GM12878 (cell line): ENCODE measurements at regions of chr6 and their contacts with region 1.

Region 1: GRCh38 chr6:157756708-157757429 is 66.2 kb upstream of the SNX9 start:
- DNase-seq: no peak
- ATAC-seq: peak; percentile 71
- H3K4me3 ChIP-seq: no peak overlapping the region
- H3K27ac ChIP-seq: no peak overlapping the region
- H3K4me1 ChIP-seq: peaks cover 17% of the 10 kb centered on the region
- H3K27me3 ChIP-seq: peaks cover 0 to 3% of the 10 kb centered on the region in 2 experiments; a peak in 2 of 4 replicates
- CTCF ChIP-seq: peak; percentile 74 to 88 (median 79)
- EP300 ChIP-seq: no peak
- POLR2A ChIP-seq: no peak
- RAD21 ChIP-seq: peak; percentile 74

Region 2: GRCh38 chr6:157845493-157846259 is 88.8 kb after region 1 on chr6:
- CTCF ChIA-PET with region 1: interaction called, 11 read pairs
- POLR2A ChIA-PET with region 1: no interaction called
- RAD21 ChIA-PET with region 1: no interaction called
- SMC1A ChIA-PET with region 1: interaction called, 6 read pairs
- in situ Hi-C with region 1: no loop called
- intact Hi-C with region 1: no loop called
- DNase-seq: no peak
- ATAC-seq: no peak; the same call in 2 of the 3 replicates
- H3K4me3 ChIP-seq: no peak overlapping the region
- H3K27ac ChIP-seq: no peak overlapping the region
- H3K4me1 ChIP-seq: peaks cover 21% of the 10 kb centered on the region
- H3K27me3 ChIP-seq: no peaks in the 10 kb centered on the region; a peak in 1 of 4 replicates
- CTCF ChIP-seq: no peak
- EP300 ChIP-seq: no peak
- POLR2A ChIP-seq: no peak
- RAD21 ChIP-seq: no peak

Region 3: DNA sequence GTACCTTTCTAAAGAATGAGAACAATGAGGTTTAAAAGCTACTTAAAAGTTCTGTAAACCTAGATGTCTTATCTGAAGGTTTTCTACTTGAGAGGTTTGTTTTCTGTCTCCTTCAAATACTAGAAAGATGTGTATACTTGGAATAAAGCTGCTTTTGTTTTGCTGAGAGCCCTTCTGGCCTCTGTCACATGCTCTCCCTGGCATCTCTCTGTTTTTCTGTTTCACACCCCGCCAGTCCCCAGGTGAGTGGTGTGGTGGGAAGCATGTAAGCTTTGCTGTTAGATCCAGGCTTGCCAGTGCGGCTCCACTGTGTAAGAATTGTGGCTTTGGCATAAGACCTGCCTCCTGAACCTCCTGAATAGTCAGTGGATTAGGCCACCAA is 123.0 kb after region 1 on chr6:
- CTCF ChIA-PET with region 1: interaction called, 33 read pairs
- POLR2A ChIA-PET with region 1: no interaction called
- RAD21 ChIA-PET with region 1: interaction called, 7 read pairs
- SMC1A ChIA-PET with region 1: interaction called, 208 read pairs
- in situ Hi-C with region 1: loop called (anchors 5 kb)
- intact Hi-C with region 1: no loop called
- DNase-seq: no peak
- ATAC-seq: peak; percentile 73
- H3K4me3 ChIP-seq: no peak overlapping the region
- H3K27ac ChIP-seq: no peak overlapping the region
- H3K4me1 ChIP-seq: peaks cover 7% of the 10 kb centered on the region; the same call in 1 of the 2 replicates
- H3K27me3 ChIP-seq: no peaks in the 10 kb centered on the region; a peak in 1 of 4 replicates
- CTCF ChIP-seq: no peak
- EP300 ChIP-seq: no peak
- POLR2A ChIP-seq: no peak
- RAD21 ChIP-seq: no peak

Region 4: DNA sequence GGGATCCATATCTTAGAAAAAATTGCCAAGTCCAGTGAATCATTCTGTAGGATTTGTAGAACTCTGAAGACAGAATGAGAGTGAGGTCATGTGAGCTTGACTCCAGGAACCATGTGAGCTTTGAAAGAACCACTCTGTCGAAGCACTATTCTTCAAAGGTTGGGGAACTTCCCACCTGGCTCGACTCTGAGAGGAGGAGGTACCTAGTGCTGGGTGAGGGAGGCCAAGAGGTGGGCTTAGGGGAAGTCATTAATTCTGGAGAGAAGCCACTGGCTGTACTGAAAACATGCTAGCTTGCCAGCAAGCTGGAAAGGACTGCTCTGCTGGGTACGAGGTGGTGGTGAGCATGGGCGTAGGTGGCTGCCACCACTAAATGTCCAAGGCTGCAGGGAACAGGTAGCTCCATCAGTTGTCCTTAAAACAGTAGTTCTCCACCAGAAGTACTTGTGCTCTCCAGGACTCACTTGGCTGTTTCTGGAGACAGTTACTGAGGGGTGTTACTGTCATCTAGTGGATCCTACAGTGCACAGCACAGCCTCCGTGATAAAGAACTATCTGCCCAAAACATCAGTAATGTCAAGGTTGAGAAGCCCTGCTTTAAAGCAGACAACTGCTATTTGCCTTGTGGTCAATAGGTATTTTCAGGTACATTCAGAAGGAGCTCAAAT is 190.1 kb after region 1 on chr6:
- CTCF ChIA-PET with region 1: interaction called, 25 read pairs
- POLR2A ChIA-PET with region 1: no interaction called
- RAD21 ChIA-PET with region 1: no interaction called
- SMC1A ChIA-PET with region 1: interaction called, 15 read pairs
- in situ Hi-C with region 1: loop called (anchors 5 kb)
- intact Hi-C with region 1: loop called (anchors 1 kb)
- DNase-seq: peak; percentile 9
- ATAC-seq: peak; percentile 93
- H3K4me3 ChIP-seq: no peak overlapping the region
- H3K27ac ChIP-seq: no peak overlapping the region
- H3K4me1 ChIP-seq: no peaks in the 10 kb centered on the region
- H3K27me3 ChIP-seq: no peaks in the 10 kb centered on the region
- CTCF ChIP-seq: peak; percentile 80 to 89 (median 87)
- EP300 ChIP-seq: no peak
- POLR2A ChIP-seq: no peak
- RAD21 ChIP-seq: peak; percentile 89

Region 5: DNA sequence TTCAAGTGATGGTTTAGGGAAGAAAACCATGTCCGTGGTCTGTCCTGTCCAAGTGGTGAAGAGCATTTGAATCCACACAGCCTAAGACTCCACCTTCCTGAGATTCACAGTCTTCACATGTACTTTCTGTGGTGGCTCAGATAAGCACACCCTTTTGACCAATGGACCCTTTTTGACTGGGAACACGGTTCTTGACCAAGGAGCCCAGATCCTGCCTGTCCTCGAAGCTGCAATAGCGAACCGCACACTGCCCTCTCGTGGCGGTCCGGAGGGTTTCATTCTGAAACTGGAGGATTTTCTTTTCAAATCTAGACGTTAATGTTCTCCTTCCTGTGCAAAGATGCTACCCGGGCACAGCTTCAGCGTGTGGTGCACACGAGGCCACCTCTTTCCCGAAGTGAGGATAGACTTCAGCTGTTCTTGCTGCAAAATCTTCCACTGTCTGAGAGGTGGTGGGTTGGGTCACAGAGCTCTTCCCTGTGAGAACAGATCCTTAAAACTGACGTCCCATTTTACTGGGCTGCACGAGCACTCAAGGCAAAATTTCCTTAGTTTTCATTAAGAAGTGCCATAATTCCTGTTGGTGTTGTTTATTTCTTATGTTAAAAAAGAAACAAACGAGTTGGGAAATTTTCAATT is 315.3 kb after region 1 on chr6:
- CTCF ChIA-PET with region 1: interaction called, 19 read pairs
- POLR2A ChIA-PET with region 1: no interaction called
- RAD21 ChIA-PET with region 1: interaction called, 6 read pairs
- SMC1A ChIA-PET with region 1: interaction called, 5 read pairs
- in situ Hi-C with region 1: no loop called
- intact Hi-C with region 1: loop called (anchors 1 kb)
- DNase-seq: peak; percentile 23
- ATAC-seq: peak; percentile 92
- H3K4me3 ChIP-seq: no peak overlapping the region
- H3K27ac ChIP-seq: no peak overlapping the region
- H3K4me1 ChIP-seq: no peaks in the 10 kb centered on the region
- H3K27me3 ChIP-seq: no peaks in the 10 kb centered on the region
- CTCF ChIP-seq: peak; percentile 81 to 87 (median 86)
- EP300 ChIP-seq: no peak
- POLR2A ChIP-seq: no peak
- RAD21 ChIP-seq: peak; percentile 85